Cardiac septum (tissue), 1 donor: ENCODE measurements at regions of chr9 and their contacts with region 1.

Region 1: GRCh38 chr9:127950513-127951289 is 13.0 kb upstream of the DPM2 start:
- DNase-seq: peak; percentile 85

Region 2: GRCh38 chr9:127971357-127972315 is 20.9 kb after region 1 on chr9:
- intact Hi-C with region 1: loop called (anchors 2 kb)
- DNase-seq: no peak

Region 3: DNA sequence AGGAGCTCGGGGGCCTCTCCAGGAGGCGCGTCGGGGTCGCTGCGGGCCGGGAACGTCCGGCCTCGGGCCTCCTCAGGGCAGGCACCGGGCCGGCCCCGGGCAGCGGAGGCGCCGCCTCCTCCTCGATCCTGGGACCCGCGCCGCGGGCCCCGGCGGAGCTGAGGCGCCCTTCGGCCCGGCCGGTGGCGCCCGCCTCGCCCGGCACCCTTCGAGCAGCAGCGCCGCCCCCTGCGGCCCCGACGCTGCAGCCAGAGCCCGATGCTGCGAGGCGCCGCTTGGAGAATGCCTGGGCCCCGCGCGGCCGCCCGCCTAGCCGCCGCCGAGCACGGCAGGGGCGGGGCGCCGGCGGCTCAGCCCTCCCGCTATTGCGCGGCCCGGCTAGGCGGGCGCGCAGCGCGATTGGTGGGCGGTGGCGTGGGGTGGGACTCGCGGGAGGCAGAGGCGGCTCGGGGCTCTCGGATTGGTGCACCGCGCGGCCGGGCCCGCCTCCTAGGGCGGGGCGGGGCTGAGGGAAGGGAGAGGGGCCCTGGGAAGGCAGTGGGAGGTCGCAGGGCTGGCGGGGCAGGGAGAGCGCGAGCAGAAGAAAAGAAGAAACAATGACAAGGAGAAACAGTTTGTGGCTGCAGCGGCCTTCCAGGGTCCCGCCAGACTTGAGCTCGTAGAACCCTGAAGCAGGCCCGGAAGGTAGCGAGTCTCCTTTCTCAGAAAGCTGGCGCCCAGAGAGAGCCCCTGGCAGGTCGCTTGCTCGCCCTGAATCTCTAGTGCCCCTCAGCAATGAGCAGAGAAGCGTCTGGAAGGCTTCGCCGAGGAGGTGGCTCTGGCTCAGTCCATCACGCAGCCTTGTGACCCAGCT is 30.2 kb after region 1 on chr9 and contains the start of gene EEIG1:
- intact Hi-C with region 1: loop called (anchors 2 kb)
- DNase-seq: peak; percentile 98
- total RNA-seq, gene EEIG1: 24.1 TPM